CD8-positive, alpha-beta memory T cell (primary cell): ENCODE measurements at regions of chr13 and their contacts with region 1.

Region 1: GRCh38 chr13:48580185-48580803 is 47.4 kb upstream of the RCBTB2 start:
- DNase-seq: peak; percentile 62 to 75 (median 67)
- H3K4me3 ChIP-seq: no peak overlapping the region
- H3K4me3 Mint-ChIP-seq: no peak overlapping the region
- H3K27ac ChIP-seq: no peak overlapping the region
- H3K27ac Mint-ChIP-seq: no peak overlapping the region
- H3K4me1 ChIP-seq: peaks cover 9% of the 10 kb centered on the region
- H3K4me1 Mint-ChIP-seq: peaks cover 5 to 24% (median 23%) of the 10 kb centered on the region in 3 donors
- H3K27me3 ChIP-seq: no peaks in the 10 kb centered on the region
- H3K27me3 Mint-ChIP-seq: peaks cover 4 to 7% of the 10 kb centered on the region in 2 donors

Region 2: GRCh38 chr13:48334534-48335127 is 245.7 kb before region 1 on chr13:
- CTCF ChIA-PET with region 1: interaction called, 67 read pairs
- POLR2A ChIA-PET with region 1: interaction called, 6 read pairs
- DNase-seq: peak in 2 of 5 donors; percentile 42 to 43
- H3K4me3 ChIP-seq: no peak overlapping the region
- H3K4me3 Mint-ChIP-seq: no peak overlapping the region
- H3K27ac ChIP-seq: no peak overlapping the region
- H3K27ac Mint-ChIP-seq: no peak overlapping the region
- H3K4me1 ChIP-seq: no peaks in the 10 kb centered on the region
- H3K4me1 Mint-ChIP-seq: peaks cover 4 to 17% (median 16%) of the 10 kb centered on the region in 3 donors
- H3K27me3 ChIP-seq: no peaks in the 10 kb centered on the region
- H3K27me3 Mint-ChIP-seq: peaks cover 0 to 2% of the 10 kb centered on the region in 2 donors

Region 3: GRCh38 chr13:48400850-48401291 is 179.4 kb before region 1 on chr13:
- CTCF ChIA-PET with region 1: interaction called, 20 read pairs
- POLR2A ChIA-PET with region 1: interaction called, 3 read pairs
- DNase-seq: peak in 1 of 5 donors; percentile 10
- H3K4me3 ChIP-seq: no peak overlapping the region
- H3K4me3 Mint-ChIP-seq: peak overlapping the region in 6 of 7 donors; percentile 35 to 61 (median 48)
- H3K27ac ChIP-seq: no peak overlapping the region
- H3K27ac Mint-ChIP-seq: peak overlapping the region; percentile 22 to 90 (median 78)
- H3K4me1 ChIP-seq: peaks cover 45% of the 10 kb centered on the region
- H3K4me1 Mint-ChIP-seq: peaks cover 57 to 88% (median 79%) of the 10 kb centered on the region in 3 donors
- H3K27me3 ChIP-seq: no peaks in the 10 kb centered on the region
- H3K27me3 Mint-ChIP-seq: no peaks in the 10 kb centered on the region

Region 4: DNA sequence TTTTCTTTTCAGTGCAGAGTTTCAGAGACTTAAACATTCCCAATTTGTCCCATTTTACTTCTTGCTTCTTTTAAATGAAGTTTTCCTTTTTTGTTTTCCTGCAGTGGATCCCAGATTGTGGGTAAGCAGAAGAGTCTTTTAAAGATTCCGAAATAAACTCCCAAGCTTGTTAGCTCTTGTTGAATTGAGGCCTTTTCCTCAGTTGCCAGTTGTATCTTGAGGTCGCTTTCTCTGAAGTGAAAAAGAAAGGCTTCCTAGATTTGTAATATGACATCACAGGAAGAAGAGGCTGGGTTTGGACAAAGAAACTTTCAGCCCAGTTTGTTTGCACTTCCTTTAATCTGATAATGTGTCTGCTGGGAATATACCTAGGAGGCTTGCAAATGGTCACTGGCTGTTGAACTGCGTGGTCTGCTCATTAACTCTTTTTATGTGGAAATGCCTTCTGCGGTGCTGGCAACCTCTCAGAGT is 167.4 kb before region 1 on chr13 and contains the start of gene LPAR6:
- CTCF ChIA-PET with region 1: no interaction called
- POLR2A ChIA-PET with region 1: no interaction called
- DNase-seq: peak in 2 of 5 donors; percentile 21 to 23
- H3K4me3 ChIP-seq: peak within 1 kb of the TSS; percentile 78
- H3K4me3 Mint-ChIP-seq: peak within 1 kb of the TSS; percentile 88 to 97 (median 96)
- H3K27ac ChIP-seq: peak within 1 kb of the TSS; percentile 33
- H3K27ac Mint-ChIP-seq: peak within 1 kb of the TSS; percentile 85 to 98 (median 95)
- H3K4me1 ChIP-seq: peaks cover 32% of the 10 kb centered on the region
- H3K4me1 Mint-ChIP-seq: peaks cover 42 to 58% (median 55%) of the 10 kb centered on the region in 3 donors
- H3K27me3 ChIP-seq: no peaks in the 10 kb centered on the region
- H3K27me3 Mint-ChIP-seq: no peaks in the 10 kb centered on the region
- total RNA-seq, gene LPAR6: 7.9 to 8.8 TPM

Region 5: GRCh38 chr13:48532506-48533499 is 47.5 kb before region 1 on chr13 and contains the start of gene RCBTB2:
- CTCF ChIA-PET with region 1: interaction called, 19 read pairs
- POLR2A ChIA-PET with region 1: interaction called, 6 read pairs
- DNase-seq: peak; percentile 98 to 100 (median 98)
- H3K4me3 ChIP-seq: peak within 1 kb of the TSS; percentile 86
- H3K4me3 Mint-ChIP-seq: peak within 1 kb of the TSS; percentile 92 to 97 (median 96)
- H3K27ac ChIP-seq: peak within 1 kb of the TSS; percentile 88
- H3K27ac Mint-ChIP-seq: peak within 1 kb of the TSS; percentile 96 to 99 (median 98)
- H3K4me1 ChIP-seq: peaks cover 30% of the 10 kb centered on the region
- H3K4me1 Mint-ChIP-seq: peaks cover 26 to 49% (median 48%) of the 10 kb centered on the region in 3 donors
- H3K27me3 ChIP-seq: no peaks in the 10 kb centered on the region
- H3K27me3 Mint-ChIP-seq: peaks cover 0 to 12% of the 10 kb centered on the region in 2 donors
- total RNA-seq, gene RCBTB2: 5.4 to 6.5 TPM

Region 6: DNA sequence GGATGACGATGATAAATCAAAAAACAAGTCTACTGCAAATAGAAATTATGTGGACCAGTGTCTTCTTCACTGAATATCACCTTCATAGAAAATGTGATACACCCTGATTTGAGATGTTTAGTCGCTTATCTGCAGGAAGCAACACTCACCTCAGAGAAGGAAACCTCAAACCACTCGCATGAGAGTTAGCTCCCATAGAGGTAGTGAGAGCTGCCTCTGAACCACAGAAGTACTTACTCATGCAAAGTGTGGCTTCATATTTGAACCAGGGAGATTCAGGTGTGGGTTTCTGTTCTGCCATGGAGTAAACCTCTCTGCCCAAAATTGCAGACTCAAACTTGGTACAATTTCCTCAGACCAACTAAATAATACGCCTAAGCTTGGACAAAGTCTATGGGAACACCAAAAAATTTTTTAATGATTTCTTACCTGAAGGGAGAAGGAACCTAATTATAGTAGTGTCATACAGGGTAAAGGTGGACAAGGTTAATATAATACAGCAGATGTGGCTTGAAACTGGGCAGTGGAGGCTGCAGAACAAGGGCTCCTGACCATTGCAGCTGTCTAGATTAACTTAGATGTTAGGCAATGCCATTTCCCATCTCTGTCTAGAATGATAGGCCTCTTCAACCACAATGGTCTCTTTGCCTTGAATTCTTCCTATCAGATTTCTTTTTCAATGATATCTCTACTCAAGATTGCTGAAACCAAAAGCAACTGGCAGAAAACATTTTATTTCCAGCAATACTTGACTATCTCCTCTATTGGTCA is 17.8 kb before region 1 on chr13:
- CTCF ChIA-PET with region 1: interaction called, 15 read pairs
- POLR2A ChIA-PET with region 1: interaction called, 8 read pairs
- DNase-seq: peak; percentile 38 to 85 (median 80)
- H3K4me3 ChIP-seq: peak overlapping the region; percentile 30
- H3K4me3 Mint-ChIP-seq: peak overlapping the region; percentile 8 to 79 (median 56)
- H3K27ac ChIP-seq: no peak overlapping the region
- H3K27ac Mint-ChIP-seq: peak overlapping the region in 6 of 8 donors; percentile 4 to 85 (median 42)
- H3K4me1 ChIP-seq: peaks cover 32% of the 10 kb centered on the region
- H3K4me1 Mint-ChIP-seq: peaks cover 46 to 79% (median 61%) of the 10 kb centered on the region in 3 donors
- H3K27me3 ChIP-seq: no peaks in the 10 kb centered on the region
- H3K27me3 Mint-ChIP-seq: peaks cover 0 to 3% of the 10 kb centered on the region in 2 donors

Region 7: DNA sequence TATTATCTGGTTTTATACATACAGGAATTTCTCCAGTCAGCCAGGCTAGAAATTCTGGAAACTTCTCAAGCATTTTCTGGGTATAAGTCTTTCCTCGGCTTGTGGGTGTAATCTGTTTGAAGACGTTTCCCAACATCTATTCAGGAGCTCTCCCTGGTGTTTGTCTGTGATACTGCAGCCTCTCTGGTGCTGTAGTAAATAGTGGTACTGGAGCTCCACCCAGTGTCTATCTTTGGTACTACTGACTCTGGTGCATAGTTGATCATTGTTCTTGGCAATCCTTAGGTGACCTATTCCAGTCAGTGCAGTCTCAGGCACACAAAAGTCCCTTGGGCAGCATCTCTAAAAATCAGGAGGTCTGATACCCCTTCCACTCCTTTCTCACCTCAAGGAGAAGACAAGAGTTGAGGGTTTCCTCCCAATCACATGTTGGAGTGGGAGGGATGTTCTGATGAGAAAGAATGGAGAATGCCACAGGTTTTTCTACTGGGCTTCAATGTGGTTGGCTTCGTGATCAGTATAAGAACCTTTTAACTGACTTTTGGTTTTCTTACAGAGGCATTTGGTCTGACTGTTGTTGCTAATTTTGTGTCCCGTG is 188.9 kb after region 1 on chr13:
- CTCF ChIA-PET with region 1: interaction called, 12 read pairs
- POLR2A ChIA-PET with region 1: no interaction called
- DNase-seq: peak; percentile 61 to 83 (median 75)
- H3K4me3 ChIP-seq: no peak overlapping the region
- H3K4me3 Mint-ChIP-seq: no peak overlapping the region
- H3K27ac ChIP-seq: no peak overlapping the region
- H3K27ac Mint-ChIP-seq: no peak overlapping the region
- H3K4me1 ChIP-seq: no peaks in the 10 kb centered on the region
- H3K4me1 Mint-ChIP-seq: peaks cover 3 to 21% (median 5%) of the 10 kb centered on the region in 3 donors
- H3K27me3 ChIP-seq: no peaks in the 10 kb centered on the region
- H3K27me3 Mint-ChIP-seq: peaks cover 8 to 28% of the 10 kb centered on the region in 2 donors